ENCODE measurements at regions of chr4 and their contacts with region 1.

Region 1: DNA sequence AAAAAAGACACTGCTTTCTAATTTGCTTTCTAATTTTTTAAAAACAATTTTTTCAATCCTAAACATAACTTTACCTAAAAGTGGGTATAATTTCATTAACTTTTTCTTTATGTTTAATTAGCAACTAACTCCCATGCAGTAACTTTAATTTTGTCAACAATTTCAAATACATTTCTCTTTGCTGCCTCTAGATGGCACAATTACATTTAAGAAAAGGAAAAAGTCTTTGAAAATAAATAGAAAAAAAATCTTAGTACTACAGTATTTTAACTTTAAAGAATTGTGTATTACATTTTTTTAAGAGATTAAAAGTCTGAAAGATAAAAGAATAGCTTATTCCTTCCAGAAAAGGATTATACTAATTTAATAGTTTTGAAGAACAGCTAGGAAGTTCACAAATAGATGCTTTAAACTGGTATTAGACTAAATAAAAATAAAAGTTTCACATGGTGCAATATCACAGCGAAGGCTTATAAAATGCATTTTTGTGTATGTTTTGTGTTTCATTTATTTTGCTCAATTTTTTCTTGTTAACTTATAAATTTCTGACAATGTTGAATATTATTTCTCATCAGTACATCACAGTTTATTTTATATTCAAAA is 105.1 kb downstream of the ADGRA3 start:
- ATAC-seq: no peak
- H3K4me3 ChIP-seq: no peak overlapping the region
- H3K27ac ChIP-seq: no peak overlapping the region
- H3K4me1 ChIP-seq: no peaks in the 10 kb centered on the region

Region 2: GRCh38 chr4:22268350-22269025 is 142.3 kb before region 1 on chr4:
- in situ Hi-C with region 1: no loop called
- ATAC-seq: no peak
- H3K4me3 ChIP-seq: no peak overlapping the region
- H3K27ac ChIP-seq: no peak overlapping the region
- H3K4me1 ChIP-seq: no peaks in the 10 kb centered on the region

Region 3: DNA sequence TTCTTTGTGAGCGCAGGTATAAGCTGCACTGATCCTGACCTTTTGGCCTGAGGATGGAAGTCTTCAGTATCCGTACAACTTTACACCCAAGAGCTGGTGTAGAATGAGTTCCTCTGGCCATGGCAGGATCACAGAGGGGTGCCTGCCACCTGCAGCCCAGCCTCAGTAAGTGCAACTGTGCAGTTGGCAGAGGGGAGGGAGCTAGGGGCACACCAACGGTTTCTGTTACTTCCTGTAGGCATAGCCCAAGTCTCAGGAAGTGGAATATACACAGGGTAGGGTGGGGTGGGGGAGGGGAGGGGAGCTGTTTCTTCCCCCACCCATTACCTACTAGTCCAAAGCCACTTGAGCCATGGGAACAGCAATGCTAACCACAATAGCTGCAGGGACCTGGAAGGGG is 196.6 kb after region 1 on chr4:
- in situ Hi-C with region 1: loop called in 2 of 9 experiments (anchors 25 kb)
- ATAC-seq: peak in 5 of 8 experiments; percentile 24 to 98 (median 89)
- H3K4me3 ChIP-seq: no peak overlapping the region
- H3K27ac ChIP-seq: no peak overlapping the region
- H3K4me1 ChIP-seq: no peaks in the 10 kb centered on the region

Measured in motor neuron (in vitro differentiated cells).